ENCODE measurements at regions of chr17 and their contacts with region 1.

Region 1: GRCh38 chr17:77404812-77405581 is 264.2 kb downstream of the SEC14L1 start:
- DNase-seq: peak; percentile 91
- H3K4me3 Mint-ChIP-seq: peak overlapping the region; percentile 85
- H3K27ac Mint-ChIP-seq: peak overlapping the region; percentile 96
- H3K4me1 Mint-ChIP-seq: peaks cover 99% of the 10 kb centered on the region
- H3K27me3 Mint-ChIP-seq: no peaks in the 10 kb centered on the region

Region 2: GRCh38 chr17:77297693-77298666 is 107.0 kb before region 1 on chr17:
- CTCF ChIA-PET with region 1: no interaction called
- DNase-seq: no peak
- H3K4me3 Mint-ChIP-seq: no peak overlapping the region
- H3K27ac Mint-ChIP-seq: no peak overlapping the region
- H3K4me1 Mint-ChIP-seq: no peaks in the 10 kb centered on the region
- H3K27me3 Mint-ChIP-seq: peaks cover 27% of the 10 kb centered on the region

Region 3: GRCh38 chr17:77331301-77331864 is 73.6 kb before region 1 on chr17:
- CTCF ChIA-PET with region 1: interaction called, 37 read pairs
- DNase-seq: peak; percentile 98
- H3K4me3 Mint-ChIP-seq: peak overlapping the region; percentile 68
- H3K27ac Mint-ChIP-seq: peak overlapping the region; percentile 94
- H3K4me1 Mint-ChIP-seq: peaks cover 71% of the 10 kb centered on the region
- H3K27me3 Mint-ChIP-seq: peaks cover 8% of the 10 kb centered on the region

Region 4: DNA sequence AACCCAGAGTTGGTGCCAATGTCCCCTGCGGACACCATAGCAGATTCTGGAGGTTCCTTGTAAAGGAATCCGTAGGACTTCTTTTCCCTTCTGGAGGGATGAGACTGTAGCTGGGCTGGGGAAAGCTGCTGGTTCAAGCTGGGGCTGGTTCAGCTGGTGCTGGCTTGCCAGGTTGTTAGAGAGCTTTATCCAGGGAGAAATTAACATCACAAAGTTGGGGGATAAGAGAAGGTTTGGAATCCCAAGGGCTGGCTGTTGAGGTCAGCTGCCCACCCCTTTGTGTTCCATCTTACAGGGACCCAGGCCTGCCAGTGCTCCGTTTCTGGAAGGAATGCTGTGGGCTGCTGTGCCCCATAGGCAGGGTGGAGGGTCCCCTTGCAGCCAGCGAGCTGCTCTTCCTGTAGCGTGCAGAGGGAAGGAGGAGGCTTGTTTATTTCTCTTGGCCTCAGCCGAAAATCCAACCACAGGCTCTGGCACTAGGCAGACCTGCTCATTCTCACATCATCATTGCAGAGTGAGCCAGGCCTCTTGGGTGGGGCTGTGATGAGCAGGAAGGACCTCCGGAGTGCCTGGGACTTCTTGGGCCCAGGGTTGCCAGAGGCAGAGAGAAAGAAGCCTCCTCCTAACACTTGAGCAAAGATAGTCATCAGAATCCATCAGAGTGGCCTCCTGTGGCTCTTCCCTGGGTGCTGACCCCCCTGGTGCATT is 13.2 kb before region 1 on chr17:
- CTCF ChIA-PET with region 1: interaction called, 24 read pairs
- DNase-seq: peak; percentile 85
- H3K4me3 Mint-ChIP-seq: peak overlapping the region; percentile 79
- H3K27ac Mint-ChIP-seq: peak overlapping the region; percentile 95
- H3K4me1 Mint-ChIP-seq: peaks cover 91% of the 10 kb centered on the region
- H3K27me3 Mint-ChIP-seq: no peaks in the 10 kb centered on the region

Region 5: DNA sequence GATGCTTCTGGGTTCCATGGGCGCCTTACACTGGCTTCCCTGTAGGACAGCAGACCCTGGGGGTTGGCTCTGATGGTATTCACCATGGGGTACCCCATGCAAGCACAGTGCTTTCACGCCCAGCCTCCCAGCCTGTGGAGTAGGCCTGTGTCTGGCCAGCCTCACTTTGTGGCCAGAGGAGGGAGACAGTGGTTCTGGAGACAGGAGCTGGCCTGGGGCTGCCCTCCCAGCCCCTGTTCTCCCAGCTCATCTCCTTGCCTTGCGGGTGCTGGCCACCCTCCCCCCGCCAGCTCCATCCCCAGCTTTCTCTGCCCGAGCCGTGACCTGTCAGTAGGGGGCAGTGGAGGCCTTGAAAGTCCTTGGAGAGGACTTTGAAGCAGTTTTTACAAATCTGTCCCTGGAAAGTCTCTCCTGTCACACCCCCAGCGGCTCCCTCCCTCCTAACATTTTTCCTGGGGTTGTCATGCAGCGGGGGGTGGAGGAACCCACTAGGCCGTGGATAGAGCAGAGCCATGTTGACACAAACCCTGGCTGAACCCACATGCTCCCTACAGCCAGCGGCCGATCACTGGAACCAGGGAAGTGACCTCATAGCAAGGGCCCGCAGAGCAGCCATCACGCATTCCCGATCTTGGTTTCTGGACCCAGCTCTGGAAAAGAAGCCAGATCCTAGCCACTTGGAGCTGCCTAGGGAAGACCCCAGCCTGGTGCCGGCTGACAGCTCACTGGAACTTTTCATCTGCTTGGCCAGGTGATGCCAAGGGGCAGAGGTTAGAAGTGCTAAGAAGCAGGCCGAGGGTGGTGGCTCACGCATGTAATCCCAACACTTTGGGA is 25.1 kb after region 1 on chr17:
- CTCF ChIA-PET with region 1: interaction called, 33 read pairs
- DNase-seq: peak; percentile 90
- H3K4me3 Mint-ChIP-seq: no peak overlapping the region
- H3K27ac Mint-ChIP-seq: peak overlapping the region; percentile 83
- H3K4me1 Mint-ChIP-seq: peaks cover 96% of the 10 kb centered on the region
- H3K27me3 Mint-ChIP-seq: no peaks in the 10 kb centered on the region

Region 6: GRCh38 chr17:77494664-77495435 is 89.9 kb after region 1 on chr17:
- CTCF ChIA-PET with region 1: interaction called, 25 read pairs
- DNase-seq: peak; percentile 78
- H3K4me3 Mint-ChIP-seq: no peak overlapping the region
- H3K27ac Mint-ChIP-seq: peak overlapping the region; percentile 76
- H3K4me1 Mint-ChIP-seq: peaks cover 28% of the 10 kb centered on the region
- H3K27me3 Mint-ChIP-seq: no peaks in the 10 kb centered on the region

Measured in activated naive CD4-positive, alpha-beta T cell treated with anti-CD3 and anti-CD28 coated beads, Interleukin-2, amount 10 ng/mL, durations not matched to agents 7 days and 5 days (primary cell).